Right lobe of liver (tissue), 6 donors: ENCODE measurements at regions of chr6 and their contacts with region 1.

Region 1: DNA sequence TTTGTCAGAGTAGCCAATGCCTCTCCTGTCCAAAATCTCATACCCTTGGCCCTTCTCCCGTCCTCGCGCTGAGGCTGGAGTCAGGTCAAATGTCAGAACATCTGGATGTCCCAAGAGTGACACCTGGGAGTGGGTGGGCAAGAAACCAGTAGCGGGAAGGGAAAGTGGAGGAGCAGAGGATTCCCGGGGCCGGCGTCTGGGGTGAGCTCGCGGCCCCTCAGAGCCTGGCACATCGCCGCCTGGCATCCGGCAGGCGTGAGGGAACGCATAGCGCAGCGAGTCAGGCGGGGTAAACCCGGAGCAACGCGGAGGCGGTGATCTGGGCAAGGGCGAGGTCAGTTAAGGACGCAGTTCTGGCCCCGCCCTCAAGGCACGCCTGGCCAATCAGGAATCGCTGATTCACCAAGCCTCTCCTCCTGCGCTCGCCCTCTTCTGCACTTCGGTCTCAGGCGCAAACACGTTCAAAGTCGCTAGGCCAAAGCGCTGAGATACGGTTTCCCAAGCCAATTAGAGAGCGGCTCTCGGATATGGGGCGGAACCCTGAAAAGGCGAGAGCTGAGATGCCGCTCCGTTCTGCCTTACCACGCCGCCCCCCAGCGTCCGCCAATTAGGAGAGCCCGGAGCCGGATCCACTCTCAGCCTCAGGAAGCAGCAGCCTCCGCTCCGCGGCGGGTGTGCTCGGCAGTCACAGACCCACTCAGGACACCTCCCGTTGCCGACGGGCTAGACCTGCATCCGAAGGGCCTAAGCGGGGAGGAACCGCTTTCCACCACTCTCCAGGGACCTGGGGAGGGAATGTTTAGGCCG is 22.5 kb downstream of the VPS52 start:
- DNase-seq: peak; percentile 97 to 99 (median 98)
- ATAC-seq: peak; percentile 91 to 95 (median 94)
- H3K4me3 ChIP-seq: peak overlapping the region; percentile 52 to 58 (median 55)
- H3K27ac ChIP-seq: peak overlapping the region; percentile 75 to 86 (median 85)
- H3K4me1 ChIP-seq: peaks cover 0 to 17% (median 7%) of the 10 kb centered on the region in 4 donors
- H3K27me3 ChIP-seq: no peaks in the 10 kb centered on the region
- CTCF ChIP-seq: peak in 3 of 4 donors; percentile 30 to 41 (median 35)
- POLR2A ChIP-seq: peak; percentile 85

Region 2: DNA sequence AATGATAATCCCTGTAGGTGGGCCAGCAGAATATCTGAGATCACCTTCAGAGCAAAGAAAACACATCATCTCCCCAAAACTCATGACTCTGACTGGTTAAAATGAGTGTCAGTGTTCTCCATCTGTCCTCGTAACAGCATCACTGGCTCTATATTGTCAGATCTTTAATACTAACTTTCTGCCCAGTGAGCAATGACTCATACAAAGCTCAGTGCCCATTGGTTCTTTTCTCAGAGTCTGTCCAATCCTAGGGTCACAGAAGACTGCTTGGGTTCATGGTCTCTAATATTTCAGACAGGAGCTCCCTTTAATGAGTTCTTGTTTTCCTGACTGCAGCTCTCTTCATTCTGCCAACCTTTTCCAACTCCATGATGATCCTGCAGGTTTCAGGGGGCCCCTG is 137.0 kb before region 1 on chr6:
- intact Hi-C with region 1: no loop called
- DNase-seq: no peak
- ATAC-seq: peak; percentile 73 to 96 (median 88)
- H3K4me3 ChIP-seq: no peak overlapping the region
- H3K27ac ChIP-seq: no peak overlapping the region
- H3K4me1 ChIP-seq: no peaks in the 10 kb centered on the region
- H3K27me3 ChIP-seq: no peaks in the 10 kb centered on the region
- CTCF ChIP-seq: no peak
- POLR2A ChIP-seq: no peak

Region 3: DNA sequence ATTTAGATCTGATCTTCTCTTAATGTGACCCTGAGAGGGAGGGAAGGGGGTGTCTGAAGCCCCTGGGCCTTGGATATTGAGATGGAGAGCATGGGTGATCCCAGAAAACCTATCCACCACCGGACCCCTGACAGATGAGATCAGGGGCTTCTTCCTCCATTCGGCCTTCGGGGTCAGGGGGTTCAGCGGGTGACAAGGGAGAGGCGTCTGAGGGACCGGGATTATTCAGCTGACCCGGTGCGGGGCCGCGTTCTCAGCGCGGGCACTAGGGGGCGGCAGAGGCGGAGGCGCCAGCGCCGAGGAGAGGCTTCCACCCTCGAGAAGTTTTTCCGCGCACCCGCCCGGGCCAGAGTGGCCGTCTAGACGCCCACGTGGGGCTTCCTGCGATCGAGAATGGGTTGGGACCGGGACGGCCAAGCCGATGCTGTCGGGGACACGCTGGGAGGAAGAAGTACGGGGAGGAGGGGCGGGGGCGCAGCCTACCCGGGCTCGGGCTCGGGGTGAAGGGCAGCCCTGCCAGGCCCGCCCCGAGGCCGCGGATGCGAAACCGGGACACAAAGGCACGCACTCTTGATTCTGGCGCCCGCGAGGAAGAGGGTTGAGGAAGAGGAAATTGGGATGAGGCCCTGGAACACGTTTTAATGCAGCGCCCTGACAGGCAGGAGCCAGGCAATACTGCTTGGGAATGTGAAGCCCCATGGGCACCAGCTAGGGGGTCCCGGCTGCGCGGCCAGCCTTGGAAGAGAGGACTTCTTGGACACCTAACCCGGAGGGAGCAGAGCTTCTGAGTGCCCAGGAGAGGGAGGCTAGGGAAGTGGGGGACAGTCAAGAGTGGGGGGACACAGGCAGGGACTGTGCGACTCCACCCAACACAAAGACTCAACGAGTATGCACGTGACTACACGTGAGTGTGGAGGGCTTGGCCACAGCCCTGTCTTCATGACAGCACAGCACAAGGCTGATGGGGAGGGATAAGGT is 87.5 kb before region 1 on chr6:
- intact Hi-C with region 1: loop called (anchors 5 to 10 kb)
- DNase-seq: peak; percentile 82 to 86 (median 83)
- ATAC-seq: peak; percentile 93 to 99 (median 98)
- H3K4me3 ChIP-seq: peak overlapping the region; percentile 42 to 52 (median 42)
- H3K27ac ChIP-seq: peak overlapping the region in 1 of 3 donors; percentile 16
- H3K4me1 ChIP-seq: peaks cover 0 to 4% (median 0%) of the 10 kb centered on the region in 4 donors
- H3K27me3 ChIP-seq: no peaks in the 10 kb centered on the region
- CTCF ChIP-seq: peak; percentile 90 to 94 (median 92)
- POLR2A ChIP-seq: no peak

Region 4: DNA sequence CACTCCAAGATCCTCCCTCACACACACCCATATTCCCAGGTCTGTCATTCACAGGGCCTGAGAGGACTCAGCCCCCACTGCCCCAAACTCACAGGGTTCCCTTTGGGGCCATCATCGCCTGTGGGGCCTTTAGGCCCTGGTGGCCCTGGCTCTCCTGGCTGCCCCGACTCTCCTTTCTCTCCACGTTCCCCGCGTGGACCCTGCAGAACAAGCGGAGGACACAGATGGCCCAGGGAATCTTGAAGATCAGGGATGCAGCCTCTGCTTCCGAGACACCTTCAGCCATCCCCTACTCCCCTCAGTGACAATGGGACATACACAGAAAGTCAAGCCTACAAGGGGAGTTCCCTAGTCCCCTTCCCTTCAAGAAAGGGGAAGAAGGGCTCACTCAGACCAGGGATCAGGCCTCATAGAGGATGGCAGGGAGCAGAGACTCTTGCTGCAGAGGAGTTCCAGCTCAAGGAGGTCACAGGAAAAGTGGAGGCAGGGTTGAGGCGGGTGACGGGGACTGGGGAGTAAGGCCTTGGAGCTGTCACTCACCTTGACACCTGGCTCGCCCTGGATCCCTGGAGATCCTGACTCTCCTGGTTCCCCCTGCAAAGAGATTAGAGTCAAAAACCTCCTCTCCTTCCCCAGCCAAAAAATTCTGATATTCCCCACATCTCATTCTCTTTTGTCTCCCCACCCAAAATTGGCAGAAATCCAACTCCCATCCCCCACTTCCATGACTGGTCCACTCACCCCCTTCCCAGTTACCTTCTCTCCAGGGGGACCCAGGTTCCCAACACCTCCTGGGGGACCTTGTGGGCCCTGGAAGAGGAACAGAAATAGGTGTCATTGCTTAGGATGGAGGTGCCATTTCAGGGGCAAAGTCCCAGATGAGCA is 79.6 kb before region 1 on chr6:
- intact Hi-C with region 1: loop called (anchors 5 to 10 kb)
- DNase-seq: no peak
- ATAC-seq: no peak
- H3K4me3 ChIP-seq: no peak overlapping the region
- H3K27ac ChIP-seq: no peak overlapping the region
- H3K4me1 ChIP-seq: no peaks in the 10 kb centered on the region
- H3K27me3 ChIP-seq: no peaks in the 10 kb centered on the region
- CTCF ChIP-seq: no peak
- POLR2A ChIP-seq: no peak